Activated CD4-positive, alpha-beta memory T cell treated with anti-CD3 and anti-CD28 coated beads for 36 hours (primary cell): ENCODE measurements at regions of chr1 and their contacts with region 1.

Region 1: GRCh38 chr1:54406339-54407153 is at the start of gene SSBP3:
- DNase-seq: peak; percentile 93
- H3K4me3 Mint-ChIP-seq: peak within 1 kb of the TSS; percentile 84
- H3K27ac Mint-ChIP-seq: peak within 1 kb of the TSS; percentile 92
- H3K4me1 Mint-ChIP-seq: peaks cover 63% of the 10 kb centered on the region
- H3K27me3 Mint-ChIP-seq: no peaks in the 10 kb centered on the region
- total RNA-seq, gene SSBP3: 44.4 to 49.6 TPM

Region 2: DNA sequence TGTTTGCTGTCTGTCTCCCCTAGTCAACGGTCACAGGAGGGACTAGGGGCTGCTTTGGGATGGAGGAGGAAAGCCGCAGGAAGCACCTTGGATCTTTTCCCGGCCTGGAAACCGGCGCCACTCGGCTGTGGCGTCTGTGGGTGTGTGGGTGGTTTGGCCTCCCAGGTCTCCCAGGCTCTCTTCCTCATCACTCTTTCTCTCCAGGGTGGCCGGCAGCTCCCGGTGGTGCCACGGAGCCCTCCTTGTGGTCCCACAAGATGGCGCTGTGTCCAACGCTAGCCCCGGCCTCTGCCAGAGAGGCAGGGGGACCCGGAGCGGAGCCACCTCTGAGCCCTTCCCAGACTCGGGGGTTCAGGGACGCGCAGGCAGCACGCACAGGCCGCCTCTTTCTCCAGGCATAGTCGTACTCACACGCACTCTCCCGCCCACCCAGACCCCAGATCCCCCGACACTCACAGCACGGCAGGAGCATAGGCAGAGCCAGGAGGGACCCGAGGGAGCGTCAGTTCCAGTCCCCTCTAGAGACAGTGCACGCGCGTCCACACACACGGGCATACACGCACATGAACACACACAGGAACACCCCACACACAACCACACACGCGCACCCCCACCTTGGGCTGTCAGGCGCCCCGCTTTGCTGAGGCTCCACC is 284.9 kb before region 1 on chr1:
- CTCF ChIA-PET with region 1: no interaction called
- POLR2A ChIA-PET with region 1: no interaction called
- intact Hi-C with region 1: loop called (anchors 5 kb)
- DNase-seq: peak; percentile 78
- H3K4me3 Mint-ChIP-seq: no peak overlapping the region
- H3K27ac Mint-ChIP-seq: no peak overlapping the region
- H3K4me1 Mint-ChIP-seq: peaks cover 5% of the 10 kb centered on the region
- H3K27me3 Mint-ChIP-seq: peaks cover 2% of the 10 kb centered on the region

Region 3: GRCh38 chr1:54229281-54229891 is 177.2 kb before region 1 on chr1:
- CTCF ChIA-PET with region 1: no interaction called
- POLR2A ChIA-PET with region 1: interaction called, 3 read pairs
- intact Hi-C with region 1: loop called (anchors 2 kb)
- DNase-seq: peak; percentile 62
- H3K4me3 Mint-ChIP-seq: no peak overlapping the region
- H3K27ac Mint-ChIP-seq: peak overlapping the region; percentile 11
- H3K4me1 Mint-ChIP-seq: peaks cover 39% of the 10 kb centered on the region
- H3K27me3 Mint-ChIP-seq: no peaks in the 10 kb centered on the region

Region 4: DNA sequence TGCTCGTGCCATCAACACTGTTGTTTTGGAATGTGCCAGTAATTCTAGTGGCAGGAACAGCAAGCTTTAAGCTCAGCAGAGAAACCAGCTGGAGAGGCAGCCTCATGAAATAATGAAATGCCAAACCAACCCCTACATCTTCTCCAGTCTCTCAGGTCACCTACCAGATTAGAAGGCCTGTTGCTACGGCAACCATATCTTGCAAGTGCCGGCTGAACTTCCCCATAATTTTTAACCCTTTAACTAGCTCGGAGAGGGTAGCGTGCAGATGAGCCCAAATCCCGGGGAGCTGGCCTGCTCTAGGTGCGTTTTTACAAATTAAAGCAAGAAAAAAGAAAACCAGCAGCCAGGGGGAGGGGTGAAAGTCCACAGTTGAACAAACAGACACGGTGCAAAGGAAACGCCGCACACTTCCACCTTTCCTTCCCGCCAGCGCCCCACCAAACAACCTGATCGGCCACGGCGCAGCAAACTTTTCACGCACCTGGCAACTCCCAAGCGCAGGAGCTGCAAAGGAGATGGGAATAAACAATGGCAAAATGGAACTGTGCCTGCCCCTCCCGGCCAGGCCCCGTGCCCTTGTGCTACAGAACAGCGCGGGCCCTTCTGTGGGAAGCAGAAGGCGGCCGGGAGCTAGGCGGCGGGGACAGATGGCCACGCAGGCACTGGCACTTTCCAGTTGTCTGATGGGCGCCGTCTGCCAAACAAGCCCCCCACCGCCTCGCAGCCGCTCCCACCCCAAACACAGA is 50.4 kb before region 1 on chr1:
- CTCF ChIA-PET with region 1: interaction called, 3 read pairs
- POLR2A ChIA-PET with region 1: interaction called, 10 read pairs
- intact Hi-C with region 1: loop called (anchors 2 kb)
- DNase-seq: peak; percentile 15
- H3K4me3 Mint-ChIP-seq: peak overlapping the region; percentile 65
- H3K27ac Mint-ChIP-seq: peak overlapping the region; percentile 70
- H3K4me1 Mint-ChIP-seq: peaks cover 71% of the 10 kb centered on the region
- H3K27me3 Mint-ChIP-seq: no peaks in the 10 kb centered on the region

Region 5: GRCh38 chr1:54516249-54516920 is 109.8 kb after region 1 on chr1:
- CTCF ChIA-PET with region 1: no interaction called
- POLR2A ChIA-PET with region 1: no interaction called
- intact Hi-C with region 1: no loop called
- DNase-seq: no peak
- H3K4me3 Mint-ChIP-seq: no peak overlapping the region
- H3K27ac Mint-ChIP-seq: no peak overlapping the region
- H3K4me1 Mint-ChIP-seq: no peaks in the 10 kb centered on the region
- H3K27me3 Mint-ChIP-seq: no peaks in the 10 kb centered on the region

Region 6: DNA sequence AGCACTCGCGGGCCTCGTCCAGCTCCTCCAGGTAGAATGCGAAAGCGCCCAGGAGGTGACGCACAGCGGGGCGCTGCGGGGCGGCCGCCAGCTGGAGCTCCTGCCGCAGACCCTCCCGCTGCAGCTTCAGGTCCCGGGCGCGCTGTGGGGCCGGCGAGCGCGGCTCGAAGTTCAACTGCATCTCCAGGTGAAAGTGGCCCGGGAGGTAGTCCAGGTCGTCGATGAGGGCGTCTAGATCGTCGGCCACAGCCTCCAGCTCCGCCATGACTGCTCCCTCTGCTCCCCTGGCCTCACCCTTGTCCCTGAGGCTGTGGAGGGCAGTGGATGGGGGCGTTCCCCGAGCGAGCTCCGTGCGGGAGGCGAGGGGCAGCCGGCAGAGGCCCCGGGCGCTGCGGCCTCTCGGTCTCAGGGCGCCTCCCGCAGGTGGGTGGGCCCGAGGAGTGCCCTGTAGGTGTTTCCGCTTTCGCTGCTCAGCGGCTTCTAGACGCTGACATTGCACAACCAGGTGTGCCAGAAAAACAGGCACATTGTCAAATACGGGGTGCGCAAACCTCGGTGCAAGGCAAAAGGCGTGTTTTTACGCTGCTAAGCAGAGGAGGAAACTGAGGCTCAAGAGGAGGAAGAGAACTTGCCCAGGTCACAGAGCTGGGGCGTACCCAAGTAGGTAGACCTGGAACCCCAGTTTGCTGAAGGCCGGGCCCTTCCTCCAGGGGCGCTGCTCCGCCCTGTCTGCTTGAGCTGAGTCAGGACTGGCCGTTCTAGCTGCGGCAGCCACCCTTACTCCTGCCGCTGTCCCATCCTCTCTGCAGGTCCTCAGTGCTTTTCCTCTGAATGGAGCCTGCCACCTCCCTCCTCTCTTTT is 394.6 kb after region 1 on chr1 and contains the start of gene TTC22:
- CTCF ChIA-PET with region 1: no interaction called
- POLR2A ChIA-PET with region 1: no interaction called
- intact Hi-C with region 1: loop called (anchors 1 kb)
- DNase-seq: peak; percentile 86
- H3K4me3 Mint-ChIP-seq: peak within 1 kb of the TSS; percentile 84
- H3K27ac Mint-ChIP-seq: peak within 1 kb of the TSS; percentile 67
- H3K4me1 Mint-ChIP-seq: peaks cover 56% of the 10 kb centered on the region
- H3K27me3 Mint-ChIP-seq: no peaks in the 10 kb centered on the region
- total RNA-seq, gene TTC22: 4.6 to 5.3 TPM